Right cardiac atrium (tissue), 5 donors: ENCODE measurements at regions of chr5 and their contacts with region 1.

Region 1: DNA sequence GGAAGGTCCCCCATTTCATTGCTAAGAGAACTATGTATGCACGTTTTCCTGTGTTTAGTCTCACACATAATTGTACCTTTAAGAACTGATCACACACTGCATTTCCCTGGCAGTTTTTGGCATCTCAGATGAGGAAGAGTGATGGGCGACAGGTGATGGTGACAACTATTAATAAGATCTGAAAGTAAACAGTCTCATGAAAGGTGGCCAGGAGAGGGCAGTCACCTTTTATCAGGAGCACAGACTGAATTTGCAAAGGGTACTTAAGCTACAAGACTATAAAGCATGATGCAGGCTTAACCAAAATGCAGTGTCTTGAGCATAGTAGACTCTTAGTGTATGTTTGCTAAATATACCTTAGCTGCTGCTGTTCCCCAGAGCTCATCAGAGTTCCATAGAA is 91.5 kb downstream of the GHR start:
- DNase-seq: no peak
- ATAC-seq: no peak
- H3K4me3 ChIP-seq: no peak overlapping the region
- H3K27ac ChIP-seq: no peak overlapping the region
- H3K4me1 ChIP-seq: peaks cover 5% of the 10 kb centered on the region
- H3K27me3 ChIP-seq: no peaks in the 10 kb centered on the region

Region 2: GRCh38 chr5:42583322-42583721 is 68.6 kb after region 1 on chr5:
- intact Hi-C with region 1: loop called in 1 of 4 experiments (anchors 10 kb)
- DNase-seq: peak; percentile 54 to 68 (median 55)
- ATAC-seq: peak; percentile 57 to 61
- H3K4me3 ChIP-seq: no peak overlapping the region
- H3K27ac ChIP-seq: no peak overlapping the region
- H3K4me1 ChIP-seq: peaks cover 3% of the 10 kb centered on the region
- H3K27me3 ChIP-seq: no peaks in the 10 kb centered on the region